Mammary epithelial cell (primary cell): ENCODE measurements at regions of chr15 and their contacts with region 1.

Region 1: GRCh38 chr15:29344474-29344873 is 74.9 kb upstream of the NSMCE3 start:
- DNase-seq: no peak
- H3K4me3 ChIP-seq: no peak overlapping the region
- H3K27ac ChIP-seq: no peak overlapping the region
- H3K4me1 ChIP-seq: no peaks in the 10 kb centered on the region
- H3K27me3 ChIP-seq: no peaks in the 10 kb centered on the region
- CTCF ChIP-seq: no peak

Region 2: DNA sequence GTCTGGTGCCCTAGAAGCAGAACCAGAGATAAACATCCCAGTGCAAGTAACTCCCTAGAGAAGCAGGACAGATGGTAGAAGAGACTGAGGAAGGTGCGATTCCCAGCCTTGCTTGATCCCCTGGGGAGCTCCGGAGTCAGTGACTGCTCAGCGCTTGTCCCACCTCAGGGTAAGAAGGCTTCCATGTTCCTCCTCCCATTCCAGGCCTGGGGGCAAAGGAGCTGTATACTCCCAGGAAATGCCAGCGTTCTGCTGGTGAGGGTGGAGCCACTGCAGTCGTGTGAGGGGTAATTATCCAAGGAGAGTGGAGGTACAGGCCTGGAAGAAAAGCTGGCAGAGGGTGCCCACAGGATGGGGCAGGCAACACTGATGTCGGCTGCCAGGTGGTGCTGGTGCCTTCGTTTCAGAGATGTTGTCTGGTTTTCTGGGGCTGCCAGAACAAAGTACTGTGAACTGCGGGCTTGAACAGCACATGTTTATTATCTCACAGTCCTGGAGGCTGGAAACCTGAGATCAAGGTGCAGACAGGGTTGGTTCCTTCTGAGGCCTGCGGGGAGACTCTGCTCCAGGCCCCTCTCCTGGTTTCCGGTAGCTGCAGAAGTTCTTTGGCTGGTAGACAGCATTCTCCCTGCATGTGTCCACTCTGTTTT is 470.8 kb before region 1 on chr15:
- CTCF ChIA-PET with region 1: no interaction called
- dilution Hi-C with region 1: no loop called
- in situ Hi-C with region 1: no loop called
- intact Hi-C with region 1: no loop called
- DNase-seq: no peak
- H3K4me3 ChIP-seq: no peak overlapping the region
- H3K27ac ChIP-seq: no peak overlapping the region
- H3K4me1 ChIP-seq: no peaks in the 10 kb centered on the region
- H3K27me3 ChIP-seq: no peaks in the 10 kb centered on the region
- CTCF ChIP-seq: no peak

Region 3: DNA sequence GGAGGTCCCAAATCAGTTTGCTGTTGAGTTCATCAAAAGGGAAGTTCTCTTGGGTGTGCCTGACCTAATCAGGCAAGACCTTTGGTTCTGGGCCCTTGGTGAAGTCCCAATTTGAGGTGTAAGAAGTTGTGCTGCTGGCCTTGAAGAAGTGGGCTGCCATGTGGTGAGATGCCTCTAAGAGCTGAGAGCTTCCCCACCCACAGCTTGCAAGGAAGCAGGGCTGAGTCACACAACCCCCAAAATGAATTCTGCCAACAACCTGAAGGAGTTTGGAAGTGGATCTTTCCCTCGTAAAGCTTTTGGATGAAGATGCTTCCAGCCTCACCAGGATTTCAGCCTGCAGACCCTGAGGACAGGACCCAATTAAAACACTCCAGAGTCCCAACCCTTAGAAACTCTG is 54.4 kb after region 1 on chr15:
- CTCF ChIA-PET with region 1: no interaction called
- dilution Hi-C with region 1: loop called (anchors 5 kb)
- in situ Hi-C with region 1: no loop called
- intact Hi-C with region 1: no loop called
- DNase-seq: no peak
- H3K4me3 ChIP-seq: no peak overlapping the region
- H3K27ac ChIP-seq: no peak overlapping the region
- H3K4me1 ChIP-seq: no peaks in the 10 kb centered on the region
- H3K27me3 ChIP-seq: no peaks in the 10 kb centered on the region
- CTCF ChIP-seq: no peak